H1 (cell line): ENCODE measurements at regions of chr3 and their contacts with region 1.

Region 1: DNA sequence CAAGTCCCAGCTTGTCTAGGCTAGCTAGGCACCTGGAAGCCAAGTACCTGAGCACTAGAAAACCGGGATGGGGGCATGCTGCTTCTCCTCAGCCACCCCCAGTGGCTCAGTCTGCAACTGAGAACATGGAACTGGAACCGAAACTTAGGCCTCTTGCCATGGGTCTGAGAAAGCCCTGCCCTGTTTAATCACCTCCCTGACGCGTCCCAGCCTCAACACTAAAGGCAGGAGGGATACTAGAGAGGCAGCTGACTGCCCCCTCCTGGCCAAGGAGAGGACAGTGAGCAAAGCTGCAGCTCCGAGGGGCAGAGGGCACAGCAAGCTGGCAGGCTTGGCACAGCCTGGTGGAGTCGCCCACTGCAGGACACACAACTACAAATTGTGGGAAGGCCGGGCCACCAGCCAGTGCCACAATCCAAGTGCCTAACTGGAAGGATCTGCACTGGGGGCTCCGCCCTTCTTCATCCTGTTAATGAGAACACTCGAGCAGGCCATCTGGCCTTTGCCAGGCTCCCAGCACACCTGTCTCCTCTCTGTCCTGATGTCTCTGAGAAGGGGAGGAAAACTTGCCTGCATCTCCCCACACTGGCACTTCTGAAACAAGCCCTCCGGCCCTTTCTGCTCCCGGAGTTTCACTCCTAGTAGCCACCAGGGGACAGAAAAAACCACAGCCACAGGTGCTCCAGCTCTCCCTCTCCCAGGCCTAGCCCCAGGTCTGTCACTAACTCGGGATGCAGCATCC is 53.7 kb downstream of the BDH1 start:
- DNase-seq: peak; percentile 49 to 78
- H3K4me3 ChIP-seq: no peak overlapping the region
- H3K27ac ChIP-seq: no peak overlapping the region
- H3K4me1 ChIP-seq: no peaks in the 10 kb centered on the region
- H3K27me3 ChIP-seq: no peaks in the 10 kb centered on the region
- CTCF ChIP-seq: peak in 2 of 3 experiments; percentile 89 to 91; a peak in 3 of 4 replicates
- EP300 ChIP-seq: no peak
- POLR2A ChIP-seq: no peak
- RAD21 ChIP-seq: peak; percentile 96 to 97

Region 2: DNA sequence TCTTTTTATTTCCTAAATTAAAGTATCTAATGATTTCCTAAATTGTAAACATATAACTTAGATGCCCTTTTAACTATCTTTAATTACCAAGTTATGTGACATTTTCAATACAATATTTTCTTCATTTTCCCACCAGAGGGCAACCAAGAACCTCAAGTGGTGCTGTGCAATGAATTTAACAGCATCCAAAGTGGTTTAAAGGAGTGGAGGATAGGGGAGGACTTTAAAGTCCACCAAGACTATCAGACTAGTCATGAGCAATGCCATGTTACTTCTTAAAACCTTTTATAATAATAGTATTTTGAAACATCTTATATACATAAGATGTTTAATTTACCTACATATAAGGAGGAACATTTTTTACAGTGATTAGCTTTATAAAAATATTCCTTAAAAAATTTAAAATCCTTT is 278.0 kb before region 1 on chr3:
- CTCF ChIA-PET with region 1: interaction called, 30 read pairs
- POLR2A ChIA-PET with region 1: no interaction called
- DNase-seq: no peak
- H3K4me3 ChIP-seq: no peak overlapping the region
- H3K27ac ChIP-seq: no peak overlapping the region
- H3K4me1 ChIP-seq: peaks cover 0 to 8% (median 3%) of the 10 kb centered on the region in 4 experiments; a peak in 4 of 7 replicates
- H3K27me3 ChIP-seq: no peaks in the 10 kb centered on the region
- CTCF ChIP-seq: peak in 2 of 3 experiments; percentile 48 to 59; a peak in 3 of 4 replicates
- EP300 ChIP-seq: no peak
- POLR2A ChIP-seq: no peak
- RAD21 ChIP-seq: peak; percentile 71 to 72

Region 3: DNA sequence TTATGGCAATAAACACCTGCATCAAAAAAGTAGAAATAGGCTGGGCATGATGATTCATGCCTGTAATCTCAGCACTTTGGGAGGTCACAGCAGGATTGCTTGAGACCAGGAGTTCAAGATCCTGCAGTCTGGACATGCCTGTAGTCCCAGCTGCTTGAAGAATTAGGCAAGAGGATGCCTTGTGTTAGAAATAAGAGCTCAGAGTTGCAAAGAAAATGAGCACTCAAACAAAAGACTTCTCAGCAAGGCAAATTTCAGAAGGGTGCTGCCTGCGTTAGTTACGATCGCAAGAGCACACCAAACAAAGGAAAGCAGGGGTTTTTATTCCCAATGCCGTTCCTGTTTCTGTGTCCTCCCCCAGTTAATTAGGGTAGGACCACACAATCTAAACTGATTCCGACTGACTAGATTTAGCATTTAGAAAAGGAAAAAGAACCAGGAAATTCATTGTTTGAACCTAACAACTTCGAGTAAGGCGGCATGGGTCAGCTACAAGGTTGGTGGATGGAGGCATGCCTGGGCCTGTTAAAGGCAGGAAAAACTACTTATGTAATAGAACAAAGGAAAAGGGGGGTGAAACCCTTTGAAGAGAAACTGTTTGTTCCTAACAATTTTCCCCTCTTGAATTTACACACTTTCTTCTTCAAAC is 259.1 kb before region 1 on chr3:
- CTCF ChIA-PET with region 1: interaction called, 11 read pairs
- POLR2A ChIA-PET with region 1: interaction called, 3 read pairs
- DNase-seq: no peak
- H3K4me3 ChIP-seq: peak overlapping the region in 1 of 4 experiments; percentile 0; a peak in 1 of 8 replicates
- H3K27ac ChIP-seq: peak overlapping the region; percentile 82
- H3K4me1 ChIP-seq: peaks cover 1 to 22% (median 8%) of the 10 kb centered on the region in 4 experiments; a peak in 4 of 7 replicates
- H3K27me3 ChIP-seq: no peaks in the 10 kb centered on the region
- CTCF ChIP-seq: no peak
- EP300 ChIP-seq: no peak
- POLR2A ChIP-seq: no peak
- RAD21 ChIP-seq: no peak

Region 4: DNA sequence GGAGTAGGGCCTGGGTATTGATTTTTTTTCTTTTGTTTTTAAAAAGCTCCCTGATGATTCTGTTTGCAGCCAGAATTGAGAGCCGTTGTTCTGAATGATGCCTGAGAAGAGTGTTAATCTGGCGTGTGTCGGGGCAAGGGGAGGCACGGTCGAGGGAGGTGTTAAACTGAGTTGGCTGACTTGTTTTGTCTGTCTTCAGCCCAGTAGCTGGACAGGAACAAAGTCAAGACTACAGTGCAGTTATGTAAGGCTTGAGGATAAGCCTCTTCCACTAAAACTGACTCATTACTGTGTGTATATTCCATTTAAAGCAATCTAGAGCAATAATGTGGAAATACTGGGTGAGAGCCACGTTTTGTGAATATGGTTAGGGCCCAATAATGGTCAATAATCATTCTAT is 84.6 kb before region 1 on chr3:
- CTCF ChIA-PET with region 1: no interaction called
- POLR2A ChIA-PET with region 1: no interaction called
- DNase-seq: no peak
- H3K4me3 ChIP-seq: no peak overlapping the region
- H3K27ac ChIP-seq: no peak overlapping the region
- H3K4me1 ChIP-seq: peaks cover 0 to 6% (median 3%) of the 10 kb centered on the region in 4 experiments; a peak in 5 of 7 replicates
- H3K27me3 ChIP-seq: no peaks in the 10 kb centered on the region
- CTCF ChIP-seq: no peak
- EP300 ChIP-seq: no peak
- POLR2A ChIP-seq: no peak
- RAD21 ChIP-seq: no peak

Region 5: DNA sequence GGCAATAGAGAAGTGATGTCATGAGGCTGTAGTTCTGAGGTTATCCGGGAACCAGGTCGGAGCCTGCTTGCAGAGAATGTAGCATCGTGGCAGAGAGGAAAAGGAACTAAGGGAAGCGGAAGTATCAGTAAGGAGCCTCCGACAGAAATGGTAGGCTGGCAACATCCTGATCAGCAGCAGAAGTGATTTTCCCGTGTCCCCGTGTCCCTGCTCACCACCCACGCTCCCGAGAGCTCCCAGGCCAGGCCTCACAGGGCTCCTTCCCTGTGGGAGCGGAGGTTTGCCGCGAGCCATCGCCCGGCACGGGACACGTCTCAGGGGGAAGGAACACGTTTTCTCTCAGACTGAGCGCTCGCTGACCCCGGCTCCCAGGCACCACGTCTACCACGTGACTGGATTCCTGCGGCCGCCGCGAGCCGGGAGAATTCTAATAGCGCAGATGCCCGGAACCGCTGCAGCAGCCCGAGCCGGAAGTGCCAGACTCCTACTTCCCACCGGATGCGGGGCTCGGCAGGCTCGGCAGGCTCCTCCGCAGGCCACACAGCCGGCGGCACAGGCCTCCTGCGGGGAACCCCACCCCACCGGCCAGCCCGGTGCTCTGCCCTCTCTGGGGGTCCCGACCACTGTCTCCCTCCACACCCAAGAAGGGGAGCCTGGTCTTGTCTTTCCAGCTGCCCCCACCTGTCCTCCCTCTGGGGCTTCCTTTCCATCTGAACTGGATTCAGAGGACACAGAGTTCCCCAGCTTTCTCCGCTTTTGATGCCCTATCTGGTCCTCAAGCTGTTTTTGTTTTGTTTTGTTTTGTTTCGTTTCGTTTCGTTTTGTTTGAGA is 45.6 kb before region 1 on chr3:
- CTCF ChIA-PET with region 1: interaction called, 10 read pairs
- POLR2A ChIA-PET with region 1: interaction called, 3 read pairs
- DNase-seq: peak; percentile 34 to 80
- H3K4me3 ChIP-seq: peak overlapping the region; percentile 54 to 75 (median 64)
- H3K27ac ChIP-seq: no peak overlapping the region; the same call in 1 of the 2 replicates
- H3K4me1 ChIP-seq: peaks cover 0 to 9% (median 1%) of the 10 kb centered on the region in 4 experiments; a peak in 3 of 7 replicates
- H3K27me3 ChIP-seq: peaks cover 0 to 11% (median 8%) of the 10 kb centered on the region in 4 experiments; a peak in 5 of 7 replicates
- CTCF ChIP-seq: no peak
- EP300 ChIP-seq: no peak
- POLR2A ChIP-seq: no peak; a peak in 1 of 3 replicates
- RAD21 ChIP-seq: peak in 1 of 2 experiments; percentile 18; a peak in 1 of 4 replicates

Region 6: GRCh38 chr3:197466586-197467399 is 35.3 kb before region 1 on chr3:
- CTCF ChIA-PET with region 1: interaction called, 12 read pairs
- POLR2A ChIA-PET with region 1: no interaction called
- DNase-seq: no peak
- H3K4me3 ChIP-seq: no peak overlapping the region
- H3K27ac ChIP-seq: no peak overlapping the region
- H3K4me1 ChIP-seq: peaks cover 4 to 15% (median 9%) of the 10 kb centered on the region in 4 experiments
- H3K27me3 ChIP-seq: peaks cover 0 to 2% (median under 1%) of the 10 kb centered on the region in 4 experiments; a peak in 1 of 7 replicates
- CTCF ChIP-seq: no peak
- EP300 ChIP-seq: no peak
- POLR2A ChIP-seq: no peak
- RAD21 ChIP-seq: no peak

Region 7: DNA sequence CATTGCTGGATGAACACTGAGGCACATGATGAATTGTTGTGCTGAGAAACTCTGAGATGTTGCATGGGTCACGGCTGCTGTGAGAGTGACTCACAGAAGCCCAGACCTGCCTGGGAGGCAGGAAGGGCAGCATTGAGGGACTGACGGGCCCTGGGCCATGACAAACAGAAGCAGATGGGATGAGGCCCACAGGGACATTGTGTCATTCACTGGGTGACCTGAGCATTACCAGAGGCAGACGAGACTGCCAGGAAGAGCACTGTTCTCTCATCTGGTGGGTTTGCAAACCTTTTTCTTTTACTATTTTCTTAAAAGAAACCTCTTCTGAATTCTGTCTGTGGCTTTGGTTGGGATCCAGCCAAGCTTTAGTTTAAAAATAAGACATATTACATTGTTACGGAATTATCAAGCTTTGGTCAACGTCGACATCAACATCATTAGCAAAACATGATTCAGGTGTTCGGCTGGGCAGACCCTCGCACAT is 14.1 kb before region 1 on chr3:
- CTCF ChIA-PET with region 1: interaction called, 24 read pairs
- POLR2A ChIA-PET with region 1: interaction called, 3 read pairs
- DNase-seq: no peak
- H3K4me3 ChIP-seq: no peak overlapping the region
- H3K27ac ChIP-seq: no peak overlapping the region
- H3K4me1 ChIP-seq: peaks cover 0 to 6% (median 2%) of the 10 kb centered on the region in 4 experiments; a peak in 4 of 7 replicates
- H3K27me3 ChIP-seq: no peaks in the 10 kb centered on the region
- CTCF ChIP-seq: no peak
- EP300 ChIP-seq: no peak
- POLR2A ChIP-seq: no peak
- RAD21 ChIP-seq: no peak

Region 8: GRCh38 chr3:197520311-197521276 is 18.5 kb after region 1 on chr3:
- CTCF ChIA-PET with region 1: interaction called, 44 read pairs
- POLR2A ChIA-PET with region 1: interaction called, 7 read pairs
- DNase-seq: peak in 1 of 2 experiments; percentile 68
- H3K4me3 ChIP-seq: no peak overlapping the region
- H3K27ac ChIP-seq: no peak overlapping the region
- H3K4me1 ChIP-seq: peaks cover 0 to 18% (median 15%) of the 10 kb centered on the region in 4 experiments; a peak in 6 of 7 replicates
- H3K27me3 ChIP-seq: no peaks in the 10 kb centered on the region
- CTCF ChIP-seq: no peak
- EP300 ChIP-seq: no peak
- POLR2A ChIP-seq: no peak
- RAD21 ChIP-seq: no peak

Region 9: GRCh38 chr3:197736491-197737318 is 234.7 kb after region 1 on chr3 and contains the start of gene RUBCN:
- CTCF ChIA-PET with region 1: no interaction called
- POLR2A ChIA-PET with region 1: no interaction called
- DNase-seq: peak; percentile 88 to 94
- H3K4me3 ChIP-seq: peak within 1 kb of the TSS; percentile 63 to 92 (median 88)
- H3K27ac ChIP-seq: peak within 1 kb of the TSS; percentile 39; the same call in 1 of the 2 replicates
- H3K4me1 ChIP-seq: no peaks in the 10 kb centered on the region; a peak in 1 of 7 replicates
- H3K27me3 ChIP-seq: no peaks in the 10 kb centered on the region
- CTCF ChIP-seq: no peak
- EP300 ChIP-seq: no peak
- POLR2A ChIP-seq: peak in 1 of 2 experiments; percentile 67; a peak in 2 of 3 replicates
- RAD21 ChIP-seq: no peak
- total RNA-seq, gene RUBCN: 18.2 and 21.9 TPM in 2 replicates